ENCODE measurements at regions of chr2 and their contacts with region 1.

Region 1: DNA sequence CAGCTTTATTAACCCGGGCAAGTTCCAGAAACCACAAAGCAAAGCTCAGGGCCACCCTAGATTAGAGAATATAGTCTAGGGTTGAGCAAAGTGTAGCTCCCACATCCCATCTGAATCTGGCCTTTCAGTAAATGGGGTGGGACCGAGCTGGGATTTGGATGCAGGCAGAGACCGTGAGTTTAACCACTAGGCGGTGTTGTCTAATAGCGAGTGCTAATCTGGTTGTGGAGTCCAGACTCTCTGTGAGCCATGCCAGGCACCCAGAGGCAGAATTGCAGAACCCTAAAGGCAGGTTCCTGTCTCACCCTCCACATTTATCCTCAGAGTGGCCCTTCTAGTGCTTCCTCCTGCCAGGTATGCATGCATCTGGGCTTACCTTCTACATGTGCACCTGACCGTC is 435.9 kb downstream of the TSN start:
- DNase-seq: peak; percentile 46
- H3K4me3 ChIP-seq: no peak overlapping the region
- H3K27ac ChIP-seq: no peak overlapping the region
- H3K4me1 ChIP-seq: no peaks in the 10 kb centered on the region
- H3K27me3 ChIP-seq: no peaks in the 10 kb centered on the region
- CTCF ChIP-seq: peak; percentile 47 to 63

Region 2: DNA sequence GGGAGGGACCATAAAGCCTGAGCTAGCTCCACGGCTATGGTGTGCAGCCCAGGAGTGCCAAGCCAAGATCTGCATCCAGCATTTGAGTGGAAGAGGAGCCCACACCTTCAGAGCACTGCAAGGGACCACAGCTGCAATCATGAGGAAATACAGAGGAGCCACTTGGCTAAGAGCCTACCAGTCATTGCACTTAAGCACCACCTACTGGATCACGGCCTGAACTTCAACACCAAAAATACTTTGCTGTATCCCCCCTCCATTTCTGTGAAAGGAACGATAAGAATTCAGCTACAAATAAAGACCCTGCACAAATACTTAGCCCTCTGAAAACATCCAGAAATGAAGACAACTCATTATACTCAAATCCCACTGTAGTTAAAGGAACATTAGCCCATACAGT is 109.4 kb after region 1 on chr2:
- CTCF ChIA-PET with region 1: no interaction called
- dilution Hi-C with region 1: no loop called
- in situ Hi-C with region 1: no loop called
- intact Hi-C with region 1: loop called (anchors 2 kb)
- DNase-seq: peak; percentile 6
- H3K4me3 ChIP-seq: no peak overlapping the region
- H3K27ac ChIP-seq: no peak overlapping the region
- H3K4me1 ChIP-seq: no peaks in the 10 kb centered on the region
- H3K27me3 ChIP-seq: no peaks in the 10 kb centered on the region
- CTCF ChIP-seq: peak in 1 of 2 donors; percentile 22

Region 3: GRCh38 chr2:122368576-122369243 is 177.4 kb after region 1 on chr2:
- CTCF ChIA-PET with region 1: no interaction called
- dilution Hi-C with region 1: no loop called
- in situ Hi-C with region 1: no loop called
- intact Hi-C with region 1: loop called (anchors 1 kb)
- DNase-seq: no peak
- H3K4me3 ChIP-seq: no peak overlapping the region
- H3K27ac ChIP-seq: no peak overlapping the region
- H3K4me1 ChIP-seq: no peaks in the 10 kb centered on the region
- H3K27me3 ChIP-seq: no peaks in the 10 kb centered on the region
- CTCF ChIP-seq: peak in 1 of 2 donors; percentile 19

Region 4: DNA sequence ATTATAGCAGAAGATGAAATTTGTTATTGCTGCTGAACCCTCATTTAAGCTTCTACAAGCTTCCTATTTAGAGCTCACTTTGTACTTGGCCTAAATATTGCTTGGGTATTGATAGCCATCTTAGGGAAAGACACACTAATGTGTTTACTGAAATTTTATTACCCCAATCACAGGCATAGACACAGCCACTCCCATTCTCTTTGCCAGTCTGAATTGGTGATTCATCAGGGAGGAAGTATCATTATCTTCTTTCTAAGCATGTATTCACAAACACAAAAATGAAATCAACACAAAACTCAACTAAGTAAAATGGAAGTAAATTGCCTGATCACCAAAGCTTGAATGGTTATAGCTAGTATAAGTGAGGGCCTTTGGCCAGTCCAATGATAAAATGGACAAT is 230.4 kb after region 1 on chr2:
- CTCF ChIA-PET with region 1: no interaction called
- dilution Hi-C with region 1: no loop called
- in situ Hi-C with region 1: no loop called
- intact Hi-C with region 1: no loop called
- DNase-seq: peak; percentile 11
- H3K4me3 ChIP-seq: no peak overlapping the region
- H3K27ac ChIP-seq: no peak overlapping the region
- H3K4me1 ChIP-seq: no peaks in the 10 kb centered on the region
- H3K27me3 ChIP-seq: peaks cover 2% of the 10 kb centered on the region
- CTCF ChIP-seq: no peak

Region 5: GRCh38 chr2:122451040-122451439 is 259.7 kb after region 1 on chr2:
- CTCF ChIA-PET with region 1: no interaction called
- dilution Hi-C with region 1: no loop called
- in situ Hi-C with region 1: no loop called
- intact Hi-C with region 1: loop called (anchors 1 kb)
- DNase-seq: peak; percentile 42
- H3K4me3 ChIP-seq: no peak overlapping the region
- H3K27ac ChIP-seq: no peak overlapping the region
- H3K4me1 ChIP-seq: no peaks in the 10 kb centered on the region
- H3K27me3 ChIP-seq: no peaks in the 10 kb centered on the region
- CTCF ChIP-seq: peak; percentile 57 to 78

Region 6: GRCh38 chr2:122748552-122749011 is 557.2 kb after region 1 on chr2:
- CTCF ChIA-PET with region 1: no interaction called
- dilution Hi-C with region 1: no loop called
- in situ Hi-C with region 1: no loop called
- intact Hi-C with region 1: loop called (anchors 2 kb)
- DNase-seq: peak; percentile 92
- H3K4me3 ChIP-seq: no peak overlapping the region
- H3K27ac ChIP-seq: peak overlapping the region; percentile 67
- H3K4me1 ChIP-seq: peaks cover 17% of the 10 kb centered on the region
- H3K27me3 ChIP-seq: no peaks in the 10 kb centered on the region
- CTCF ChIP-seq: peak in 1 of 2 donors; percentile 4

Measured in mammary epithelial cell (primary cell).